ENCODE measurements at regions of chr16 and their contacts with region 1.

Region 1: GRCh38 chr16:56938422-56939156 is 6.6 kb downstream of the HERPUD1 start:
- DNase-seq: peak; percentile 48
- H3K4me3 Mint-ChIP-seq: peak overlapping the region; percentile 85
- H3K27ac Mint-ChIP-seq: peak overlapping the region; percentile 97
- H3K4me1 Mint-ChIP-seq: peaks cover 81% of the 10 kb centered on the region
- H3K27me3 Mint-ChIP-seq: no peaks in the 10 kb centered on the region

Region 2: DNA sequence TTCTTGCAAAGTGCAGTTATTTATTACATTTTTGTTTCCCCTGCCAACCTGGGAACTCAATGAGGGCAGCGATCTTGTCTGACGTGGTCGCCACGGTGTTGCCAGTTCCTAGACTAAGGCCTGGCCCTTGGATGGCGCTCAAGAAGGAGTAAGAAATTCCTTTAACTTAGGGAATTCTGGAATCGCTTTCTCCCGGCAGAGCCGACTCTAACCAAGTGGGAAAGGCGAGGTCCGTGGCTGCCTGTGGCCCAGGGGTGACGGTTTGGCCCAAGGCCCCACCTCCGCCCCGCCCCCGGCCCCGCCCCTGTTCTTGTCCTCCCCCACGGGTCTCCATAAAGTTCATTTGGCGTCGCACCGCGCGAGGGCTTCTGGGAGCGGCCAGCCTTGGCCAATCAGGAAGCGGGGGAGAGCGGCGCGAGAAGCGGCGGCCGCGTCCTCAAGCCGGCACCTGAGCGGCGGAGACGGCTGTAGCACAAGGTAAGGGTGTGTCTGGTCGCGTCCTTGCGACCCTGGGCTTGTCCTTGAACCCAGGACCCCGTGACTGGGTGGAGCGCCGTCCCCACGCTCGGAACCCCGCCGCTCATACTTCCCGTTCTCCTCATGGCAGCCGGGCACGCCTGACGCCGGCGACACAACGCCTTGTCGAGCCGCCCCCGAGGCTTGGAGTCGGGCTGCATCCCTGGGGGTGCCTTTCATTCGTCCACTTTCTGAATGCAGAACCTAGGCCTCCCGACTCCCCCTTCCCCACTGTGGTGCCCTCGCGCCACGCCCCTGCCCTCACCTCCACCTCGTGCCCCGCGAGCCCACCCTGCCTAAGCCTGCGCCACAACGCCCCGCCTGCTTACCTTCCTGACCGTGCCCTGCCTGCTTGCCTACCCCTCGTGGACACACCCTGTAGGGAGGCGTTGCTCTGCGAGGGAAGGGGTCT is 208.6 kb before region 1 on chr16 and contains the start of gene NUP93:
- intact Hi-C with region 1: loop called (anchors 5 kb)
- DNase-seq: peak; percentile 87
- H3K4me3 Mint-ChIP-seq: no peak within 1 kb of the TSS
- H3K27ac Mint-ChIP-seq: peak within 1 kb of the TSS; percentile 88
- H3K4me1 Mint-ChIP-seq: peaks cover 13% of the 10 kb centered on the region
- H3K27me3 Mint-ChIP-seq: peaks cover 2% of the 10 kb centered on the region
- total RNA-seq, gene NUP93: 150 and 152 TPM in 2 replicates

Region 3: DNA sequence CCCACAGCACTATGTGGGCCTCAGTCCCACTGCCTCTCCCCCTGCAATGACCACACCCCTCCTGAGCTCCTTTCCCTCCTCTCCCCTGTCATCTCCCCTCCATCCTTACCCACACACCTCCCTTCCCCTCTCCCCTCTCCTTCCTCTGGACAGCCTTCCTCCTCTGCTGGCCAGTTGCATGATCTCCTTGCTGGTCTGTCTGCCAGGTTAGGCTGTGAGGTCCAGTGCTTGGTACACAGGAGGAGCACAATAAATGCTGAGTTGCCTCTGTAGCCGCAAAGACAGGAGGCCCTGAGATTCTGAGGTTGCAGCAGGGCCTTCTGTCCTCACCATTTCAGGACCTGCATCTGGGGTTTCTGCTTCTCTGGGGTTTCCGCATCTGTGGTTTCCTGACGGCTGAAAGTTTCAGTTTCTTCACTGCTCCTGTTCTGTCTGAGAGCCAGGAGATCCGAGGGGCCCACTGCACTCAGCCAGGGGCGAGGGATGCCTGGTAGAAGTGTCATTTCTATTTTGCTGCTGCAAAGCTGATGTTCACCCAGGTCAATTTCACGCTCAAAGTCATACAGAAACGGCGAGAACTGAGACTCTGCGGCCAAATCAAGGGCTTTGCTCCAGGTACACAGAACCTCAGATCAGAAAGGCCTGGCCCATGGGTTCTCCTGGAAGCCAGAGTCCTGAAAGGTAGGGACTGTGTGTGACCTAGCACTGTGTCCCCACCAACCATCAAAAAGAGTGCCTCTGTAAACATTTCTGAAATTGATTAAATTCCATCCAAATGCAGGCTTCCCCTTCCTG is 78.2 kb before region 1 on chr16:
- intact Hi-C with region 1: loop called (anchors 1 kb)
- DNase-seq: peak; percentile 58
- H3K4me3 Mint-ChIP-seq: peak overlapping the region; percentile 59
- H3K27ac Mint-ChIP-seq: peak overlapping the region; percentile 77
- H3K4me1 Mint-ChIP-seq: peaks cover 50% of the 10 kb centered on the region
- H3K27me3 Mint-ChIP-seq: peaks cover 1% of the 10 kb centered on the region

Region 4: DNA sequence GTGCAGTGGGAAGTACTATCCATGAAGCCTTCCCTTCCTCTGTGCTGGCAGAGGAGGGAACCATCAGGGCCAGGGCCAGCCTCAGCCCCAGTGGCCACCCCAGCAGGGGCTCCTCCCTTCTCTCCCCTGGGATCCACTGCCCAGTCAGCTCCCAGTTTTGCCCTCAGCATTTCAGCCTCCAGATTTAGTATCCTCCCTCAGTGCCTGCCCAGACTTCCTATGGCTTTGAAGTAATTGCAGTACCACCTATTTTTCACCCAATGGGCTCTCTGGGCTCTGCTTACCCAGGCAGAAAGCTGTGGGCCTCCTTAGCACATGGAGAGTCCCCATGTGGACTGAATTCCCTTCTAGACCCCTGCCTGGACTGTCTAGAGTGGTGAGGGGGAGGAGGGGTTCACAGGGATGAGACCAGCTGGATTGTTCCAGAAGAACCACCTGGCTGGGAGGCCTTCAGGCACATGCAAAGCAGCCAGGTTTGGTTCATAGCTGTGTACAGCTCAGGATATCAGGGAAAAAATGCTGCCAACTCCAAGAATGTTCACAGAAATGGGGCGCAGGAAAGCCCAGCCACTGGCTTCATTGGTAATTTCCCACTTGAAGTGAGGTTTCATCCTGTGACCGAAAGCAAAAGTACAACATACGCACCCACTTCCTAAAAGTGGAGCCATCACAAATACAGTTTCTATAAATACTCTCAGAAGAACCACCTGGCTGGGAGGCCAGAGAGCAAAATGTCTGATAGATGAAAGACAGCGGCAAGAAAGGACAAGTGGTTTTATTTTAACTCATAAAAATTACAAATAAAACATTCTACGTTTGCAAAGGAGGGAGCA is 21.8 kb before region 1 on chr16:
- intact Hi-C with region 1: loop called (anchors 2 kb)
- DNase-seq: peak; percentile 43
- H3K4me3 Mint-ChIP-seq: peak overlapping the region; percentile 71
- H3K27ac Mint-ChIP-seq: peak overlapping the region; percentile 93
- H3K4me1 Mint-ChIP-seq: peaks cover 50% of the 10 kb centered on the region
- H3K27me3 Mint-ChIP-seq: no peaks in the 10 kb centered on the region

Region 5: GRCh38 chr16:57519796-57520360 is 581.3 kb after region 1 on chr16:
- intact Hi-C with region 1: no loop called
- DNase-seq: peak; percentile 69
- H3K4me3 Mint-ChIP-seq: no peak overlapping the region
- H3K27ac Mint-ChIP-seq: peak overlapping the region; percentile 65
- H3K4me1 Mint-ChIP-seq: peaks cover 21% of the 10 kb centered on the region
- H3K27me3 Mint-ChIP-seq: no peaks in the 10 kb centered on the region